Breast epithelium (tissue), 4 donors: ENCODE measurements at regions of chr9 and their contacts with region 1.

Region 1: GRCh38 chr9:119289740-119290433 is 79.3 kb downstream of the BRINP1 start:
- DNase-seq: peak in 1 of 2 donors; percentile 30
- H3K4me3 ChIP-seq: no peak overlapping the region
- H3K27ac ChIP-seq: no peak overlapping the region
- H3K4me1 ChIP-seq: no peaks in the 10 kb centered on the region
- H3K27me3 ChIP-seq: no peaks in the 10 kb centered on the region
- CTCF ChIP-seq: peak; percentile 55 to 72 (median 63)
- POLR2A ChIP-seq: no peak

Region 2: GRCh38 chr9:117927354-117927753 is 1362.5 kb before region 1 on chr9:
- intact Hi-C with region 1: loop called (anchors 10 kb)
- DNase-seq: no peak
- H3K4me3 ChIP-seq: no peak overlapping the region
- H3K27ac ChIP-seq: no peak overlapping the region
- H3K4me1 ChIP-seq: no peaks in the 10 kb centered on the region
- H3K27me3 ChIP-seq: no peaks in the 10 kb centered on the region
- CTCF ChIP-seq: no peak
- POLR2A ChIP-seq: no peak

Region 3: GRCh38 chr9:118975736-118976135 is 314.2 kb before region 1 on chr9:
- intact Hi-C with region 1: loop called (anchors 5 kb)
- DNase-seq: no peak
- H3K4me3 ChIP-seq: no peak overlapping the region
- H3K27ac ChIP-seq: no peak overlapping the region
- H3K4me1 ChIP-seq: no peaks in the 10 kb centered on the region
- H3K27me3 ChIP-seq: no peaks in the 10 kb centered on the region
- CTCF ChIP-seq: no peak
- POLR2A ChIP-seq: no peak

Region 4: GRCh38 chr9:119304555-119304954 is 14.7 kb after region 1 on chr9:
- intact Hi-C with region 1: no loop called
- DNase-seq: no peak
- H3K4me3 ChIP-seq: no peak overlapping the region
- H3K27ac ChIP-seq: no peak overlapping the region
- H3K4me1 ChIP-seq: no peaks in the 10 kb centered on the region
- H3K27me3 ChIP-seq: no peaks in the 10 kb centered on the region
- CTCF ChIP-seq: no peak
- POLR2A ChIP-seq: no peak

Region 5: DNA sequence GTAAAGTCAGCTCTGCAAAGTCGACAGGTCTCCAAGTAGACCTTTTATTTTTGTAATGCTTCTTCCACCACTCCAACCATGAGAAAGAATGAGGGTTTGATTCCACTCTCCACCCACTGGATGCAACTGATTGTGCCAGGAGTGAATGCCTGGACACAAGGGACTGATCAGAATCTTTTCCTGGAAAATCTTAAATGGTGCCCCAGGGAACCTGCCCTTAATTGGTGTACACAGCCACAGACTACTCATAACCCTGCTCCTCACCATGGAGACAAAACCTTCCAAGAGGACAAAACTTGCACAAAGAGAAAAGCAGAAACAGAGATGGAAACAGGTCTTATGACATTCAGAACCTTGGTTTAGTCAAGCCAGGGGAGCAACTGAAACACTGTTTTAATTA is 288.0 kb after region 1 on chr9:
- intact Hi-C with region 1: no loop called
- DNase-seq: peak in 1 of 2 donors; percentile 66
- H3K4me3 ChIP-seq: no peak overlapping the region
- H3K27ac ChIP-seq: peak overlapping the region; percentile 52 to 61
- H3K4me1 ChIP-seq: no peaks in the 10 kb centered on the region
- H3K27me3 ChIP-seq: no peaks in the 10 kb centered on the region
- CTCF ChIP-seq: no peak
- POLR2A ChIP-seq: no peak